Activated naive CD4-positive, alpha-beta T cell treated with anti-CD3 and anti-CD28 coated beads for 36 hours (primary cell): ENCODE measurements at regions of chr20 and their contacts with region 1.

Region 1: DNA sequence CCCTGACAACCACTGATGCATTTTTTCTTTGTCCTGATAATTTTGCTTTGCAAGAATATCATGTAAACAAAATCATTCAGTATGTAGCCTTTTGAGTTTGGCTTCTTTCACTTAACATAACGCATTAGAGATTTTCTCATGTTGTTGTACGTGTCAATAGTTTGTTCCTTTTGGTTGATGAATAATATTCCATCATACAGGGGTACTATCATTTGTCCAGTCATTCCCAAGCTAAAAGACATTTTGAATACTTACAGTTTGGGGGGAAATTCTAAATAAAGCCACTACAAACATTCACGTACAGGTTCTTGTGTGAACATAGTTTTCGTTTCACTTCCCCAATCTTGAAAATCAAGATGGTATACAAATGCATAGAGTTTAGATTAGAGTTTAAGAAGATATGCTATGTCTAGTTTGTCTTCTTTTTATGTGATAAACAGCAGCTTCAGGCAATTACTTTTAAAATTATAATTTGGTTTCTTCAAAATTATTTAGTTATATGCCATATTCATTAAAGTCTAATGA is 5.2 kb downstream of the HAO1 start:
- DNase-seq: no peak
- H3K4me3 Mint-ChIP-seq: no peak overlapping the region
- H3K27ac Mint-ChIP-seq: no peak overlapping the region
- H3K4me1 Mint-ChIP-seq: no peaks in the 10 kb centered on the region
- H3K27me3 Mint-ChIP-seq: peaks cover 13% of the 10 kb centered on the region

Region 2: DNA sequence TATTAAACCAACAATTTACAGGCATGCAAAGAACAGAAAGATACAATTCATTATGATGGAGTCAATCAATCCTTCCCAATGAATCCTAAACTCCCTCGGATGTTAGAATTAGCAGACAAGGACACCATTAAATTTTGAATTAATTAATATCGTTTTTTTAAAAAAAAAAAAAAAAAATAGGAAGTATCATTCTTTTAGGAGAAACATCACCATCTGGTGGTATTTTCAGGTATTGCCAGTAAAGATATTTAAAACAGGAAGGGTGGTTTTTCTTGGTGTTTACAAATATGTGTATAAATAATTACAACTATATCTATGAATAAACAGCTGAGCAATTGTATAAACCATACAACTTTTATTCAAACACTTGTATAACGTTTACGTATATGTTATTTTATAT is 559.2 kb before region 1 on chr20:
- CTCF ChIA-PET with region 1: no interaction called
- intact Hi-C with region 1: no loop called
- DNase-seq: no peak
- H3K4me3 Mint-ChIP-seq: no peak overlapping the region
- H3K27ac Mint-ChIP-seq: no peak overlapping the region
- H3K4me1 Mint-ChIP-seq: no peaks in the 10 kb centered on the region
- H3K27me3 Mint-ChIP-seq: no peaks in the 10 kb centered on the region

Region 3: GRCh38 chr20:8305449-8305978 is 370.4 kb after region 1 on chr20:
- CTCF ChIA-PET with region 1: no interaction called
- intact Hi-C with region 1: loop called (anchors 10 kb)
- DNase-seq: peak; percentile 83
- H3K4me3 Mint-ChIP-seq: no peak overlapping the region
- H3K27ac Mint-ChIP-seq: no peak overlapping the region
- H3K4me1 Mint-ChIP-seq: no peaks in the 10 kb centered on the region
- H3K27me3 Mint-ChIP-seq: peaks cover 2% of the 10 kb centered on the region

Region 4: GRCh38 chr20:8389381-8390036 is 454.4 kb after region 1 on chr20:
- CTCF ChIA-PET with region 1: interaction called, 3 read pairs
- intact Hi-C with region 1: loop called (anchors 10 kb)
- DNase-seq: no peak
- H3K4me3 Mint-ChIP-seq: no peak overlapping the region
- H3K27ac Mint-ChIP-seq: no peak overlapping the region
- H3K4me1 Mint-ChIP-seq: no peaks in the 10 kb centered on the region
- H3K27me3 Mint-ChIP-seq: peaks cover 2% of the 10 kb centered on the region